ENCODE measurements at regions of chr12 and their contacts with region 1.

Region 1: GRCh38 chr12:43835656-43836474 is at the start of gene TMEM117:
- H3K4me3 Mint-ChIP-seq: peak within 1 kb of the TSS; percentile 78
- H3K27ac Mint-ChIP-seq: peak within 1 kb of the TSS; percentile 82
- H3K4me1 Mint-ChIP-seq: peaks cover 19% of the 10 kb centered on the region
- H3K27me3 Mint-ChIP-seq: peaks cover 37% of the 10 kb centered on the region

Region 2: DNA sequence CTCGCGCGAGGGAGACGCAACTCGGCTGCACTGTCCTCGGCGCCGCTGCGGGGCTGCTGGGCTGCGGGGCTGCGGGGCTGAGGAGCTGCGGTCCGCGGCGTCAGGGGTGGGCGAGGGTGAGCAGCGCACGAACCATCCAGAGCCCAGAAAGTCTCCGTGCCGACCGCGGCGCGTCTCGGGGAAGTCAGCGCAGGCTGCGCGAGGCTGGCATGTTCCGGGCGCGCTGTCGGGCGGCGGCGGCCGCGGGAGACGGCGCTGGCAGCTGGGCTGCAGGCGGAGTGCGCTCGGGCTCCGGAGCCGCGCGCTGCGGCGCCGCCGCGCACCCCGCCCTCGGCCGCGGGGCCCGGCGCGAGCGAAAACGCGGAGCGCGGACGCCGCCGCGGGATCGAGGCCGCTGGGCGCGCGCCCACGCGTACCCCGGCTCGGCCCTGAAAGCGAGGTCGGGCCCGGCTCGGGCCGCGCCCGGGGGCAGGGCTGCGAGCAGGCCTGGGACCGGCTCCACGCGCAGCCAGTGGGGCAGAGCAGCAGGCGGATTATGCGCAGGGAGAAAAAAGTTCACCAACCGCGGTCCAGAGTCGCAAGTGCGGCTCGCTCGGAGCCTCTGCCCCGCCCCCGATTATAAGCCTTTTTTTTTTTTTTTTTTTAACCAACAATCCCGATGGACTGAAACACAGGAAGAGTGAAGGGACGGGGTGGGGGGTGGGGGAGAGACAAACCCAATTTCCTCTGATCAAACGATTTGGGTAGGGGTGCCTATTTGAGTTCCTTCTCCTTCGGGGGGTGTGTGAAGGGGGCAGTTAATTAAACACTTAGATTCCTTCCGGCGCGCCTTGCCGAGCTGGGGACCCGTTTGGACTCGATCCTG is 1246.2 kb before region 1 on chr12 and contains the start of gene PRICKLE1:
- intact Hi-C with region 1: loop called (anchors 5 kb)
- H3K4me3 Mint-ChIP-seq: peak within 1 kb of the TSS; percentile 75
- H3K27ac Mint-ChIP-seq: peak within 1 kb of the TSS; percentile 44
- H3K4me1 Mint-ChIP-seq: peaks cover 20% of the 10 kb centered on the region
- H3K27me3 Mint-ChIP-seq: peaks cover 74% of the 10 kb centered on the region

Region 3: DNA sequence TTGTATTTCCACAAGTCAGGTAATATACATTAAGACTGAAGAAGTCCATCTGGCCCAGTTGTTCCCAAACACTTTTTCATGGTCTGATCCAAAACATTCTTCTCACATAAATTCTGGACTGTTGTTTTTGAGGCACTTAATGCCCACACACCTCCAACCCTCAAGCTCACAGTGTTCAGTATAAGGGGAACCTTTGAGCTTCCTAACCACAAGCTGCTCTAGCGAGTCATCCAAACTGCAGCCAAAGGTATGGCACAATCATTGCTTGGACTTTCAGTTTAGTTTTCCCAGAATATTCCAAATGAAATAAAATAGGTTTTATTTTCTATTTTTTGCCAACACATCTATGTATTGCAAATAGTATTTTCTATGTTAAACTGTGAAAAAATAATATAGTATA is 180.3 kb before region 1 on chr12:
- intact Hi-C with region 1: no loop called
- H3K4me3 Mint-ChIP-seq: no peak overlapping the region
- H3K27ac Mint-ChIP-seq: no peak overlapping the region
- H3K4me1 Mint-ChIP-seq: no peaks in the 10 kb centered on the region
- H3K27me3 Mint-ChIP-seq: no peaks in the 10 kb centered on the region

Region 4: GRCh38 chr12:43805860-43806736 is 29.8 kb before region 1 on chr12 and contains the start of gene TWF1:
- intact Hi-C with region 1: loop called (anchors 1 kb)
- H3K4me3 Mint-ChIP-seq: peak within 1 kb of the TSS; percentile 100
- H3K27ac Mint-ChIP-seq: peak within 1 kb of the TSS; percentile 99
- H3K4me1 Mint-ChIP-seq: peaks cover 22% of the 10 kb centered on the region
- H3K27me3 Mint-ChIP-seq: peaks cover 5% of the 10 kb centered on the region

Measured in dendritic cell treated with granulocyte-macrophage colony-stimulating factor and Interleukin-4, amounts not matched to agents 40 ng/mL and 50 ng/mL, for 4 days (primary cell).